ENCODE measurements at regions of chr11 and their contacts with region 1.

Region 1: DNA sequence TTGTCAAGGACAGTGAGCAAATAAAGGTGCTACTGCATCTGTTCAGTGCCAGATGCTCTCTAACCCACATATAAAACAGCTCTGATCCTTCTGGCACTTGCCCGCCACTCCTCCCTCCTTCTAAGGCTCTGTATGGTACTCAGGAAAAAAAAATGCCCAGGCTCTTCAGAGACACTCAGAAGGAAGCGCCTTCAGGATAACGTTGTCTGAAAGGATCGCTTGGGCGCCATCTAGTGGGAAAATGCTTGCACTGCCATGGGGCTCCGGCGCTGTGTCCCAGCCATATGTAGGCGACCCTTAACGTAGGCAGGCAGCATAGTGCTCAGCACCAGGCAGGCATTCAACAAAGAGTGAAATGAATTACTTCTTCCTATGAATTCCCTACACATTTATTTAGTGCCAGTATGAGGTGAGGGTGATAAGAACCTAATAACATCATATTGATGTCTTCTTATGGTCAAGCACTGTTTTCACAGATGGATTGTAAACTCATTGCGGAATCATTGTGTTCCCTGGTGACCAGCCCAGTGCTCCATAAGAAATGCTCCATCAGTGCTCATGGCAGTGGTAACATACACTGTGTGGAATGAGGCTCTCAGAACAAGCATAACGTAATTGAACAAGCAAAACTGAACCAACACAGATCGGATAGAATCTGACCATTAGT is 39.6 kb downstream of the PAMR1 start:
- DNase-seq: no peak
- H3K4me3 ChIP-seq: no peak overlapping the region
- CTCF ChIP-seq: peak; percentile 90

Region 2: GRCh38 chr11:35272391-35272902 is 213.3 kb before region 1 on chr11:
- CTCF ChIA-PET with region 1: no interaction called
- POLR2A ChIA-PET with region 1: no interaction called
- DNase-seq: no peak
- H3K4me3 ChIP-seq: no peak overlapping the region
- CTCF ChIP-seq: no peak

Region 3: DNA sequence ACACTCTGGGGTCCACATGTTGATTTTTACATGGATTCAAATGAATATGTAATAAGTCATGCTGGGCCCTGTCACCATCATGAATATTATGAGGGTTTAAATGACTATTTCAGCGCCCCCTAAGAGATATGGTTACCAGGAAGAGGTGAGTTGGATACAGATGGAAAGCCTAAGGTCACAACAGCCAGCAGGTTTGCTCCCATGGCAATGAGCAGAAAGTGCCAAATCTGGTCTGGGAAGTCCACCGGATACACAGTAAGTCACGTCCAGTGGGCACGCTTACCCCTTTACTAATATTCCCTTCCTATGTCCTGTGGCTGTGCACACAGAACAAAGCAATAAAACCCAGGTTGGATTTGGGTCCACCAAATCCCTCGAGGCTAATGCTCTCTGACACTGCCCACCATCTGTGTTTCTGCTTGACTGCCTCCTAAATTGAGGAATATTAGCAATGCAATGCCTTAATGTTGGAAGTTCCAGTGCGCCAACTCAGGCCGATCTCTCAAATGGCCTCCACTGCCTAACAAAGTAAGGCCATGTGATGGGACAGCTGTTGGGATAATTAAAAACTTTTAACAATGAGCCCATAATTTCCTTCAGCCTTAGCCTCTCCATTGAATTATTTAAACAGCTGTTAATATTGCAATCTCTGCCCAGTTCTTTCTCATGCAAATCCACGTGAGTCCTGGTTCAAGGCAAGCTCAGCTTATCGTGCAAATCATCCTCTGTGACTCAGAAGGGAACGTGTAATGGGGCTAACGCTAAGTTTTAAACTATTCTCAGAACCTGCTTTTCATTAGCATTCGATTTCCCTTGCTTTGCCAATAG is 164.0 kb before region 1 on chr11:
- CTCF ChIA-PET with region 1: no interaction called
- POLR2A ChIA-PET with region 1: no interaction called
- DNase-seq: peak; percentile 72
- H3K4me3 ChIP-seq: no peak overlapping the region
- CTCF ChIP-seq: no peak

Region 4: DNA sequence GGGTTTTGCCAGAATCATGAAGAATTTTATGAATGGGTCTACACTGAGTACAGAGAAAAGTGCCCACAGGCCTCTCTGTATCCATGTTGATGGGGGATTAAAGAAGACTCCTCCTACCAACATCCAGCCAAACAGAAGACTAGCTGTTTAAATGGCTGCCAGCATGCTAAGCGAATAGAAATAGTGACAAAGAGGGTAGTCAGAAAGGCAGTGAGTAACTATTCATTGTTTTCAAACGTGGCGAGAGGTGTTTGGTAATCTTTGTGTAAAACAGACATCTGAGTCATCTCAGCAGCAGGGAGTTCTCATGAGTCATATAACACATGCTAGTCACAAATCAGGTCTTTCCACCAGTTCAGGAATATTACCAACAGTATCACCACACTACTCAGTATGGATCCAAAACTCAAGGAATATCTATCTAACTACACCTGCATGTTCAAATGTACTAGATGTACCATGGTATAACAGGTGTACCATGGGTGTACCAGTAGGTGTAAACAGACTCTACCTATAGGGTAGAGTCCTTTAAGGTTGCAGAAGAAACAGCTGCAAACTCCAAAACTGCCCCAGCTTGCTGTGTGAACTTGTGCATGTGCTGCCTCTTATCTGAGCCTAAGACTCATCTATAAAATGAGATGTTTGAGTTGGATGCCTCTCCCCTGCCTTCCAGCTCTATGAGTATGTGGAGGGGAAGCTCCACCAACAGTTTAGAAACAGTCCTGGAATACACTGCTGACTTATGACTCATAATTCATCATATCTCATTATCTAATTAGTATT is 148.5 kb before region 1 on chr11:
- CTCF ChIA-PET with region 1: no interaction called
- POLR2A ChIA-PET with region 1: no interaction called
- DNase-seq: peak; percentile 89
- H3K4me3 ChIP-seq: no peak overlapping the region
- CTCF ChIP-seq: no peak

Region 5: DNA sequence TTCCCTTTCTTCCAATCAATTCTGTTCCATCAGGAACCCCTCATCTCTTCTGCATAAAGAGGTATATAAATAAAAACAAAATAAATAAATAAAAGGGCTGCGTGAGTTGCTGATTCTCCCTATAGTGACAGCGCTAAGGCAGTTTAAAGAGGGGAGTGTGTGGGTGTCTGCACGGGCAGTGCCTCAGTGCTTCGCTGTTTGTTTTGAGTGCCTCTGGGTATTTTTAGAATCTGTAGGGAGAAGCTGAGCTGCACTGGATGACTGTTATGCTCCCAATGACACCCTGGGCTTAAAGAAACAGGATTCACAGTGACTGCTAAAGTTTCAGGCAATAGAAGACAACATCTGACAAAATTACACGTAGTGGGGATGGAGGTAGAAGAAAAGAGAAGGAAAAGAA is 105.2 kb before region 1 on chr11:
- CTCF ChIA-PET with region 1: no interaction called
- POLR2A ChIA-PET with region 1: no interaction called
- DNase-seq: no peak
- H3K4me3 ChIP-seq: no peak overlapping the region
- CTCF ChIP-seq: no peak

Region 6: GRCh38 chr11:35391922-35392813 is 93.6 kb before region 1 on chr11:
- CTCF ChIA-PET with region 1: interaction called, 18 read pairs
- POLR2A ChIA-PET with region 1: no interaction called
- DNase-seq: peak; percentile 31
- H3K4me3 ChIP-seq: no peak overlapping the region
- CTCF ChIP-seq: peak; percentile 85

Region 7: GRCh38 chr11:35464308-35464707 is 21.5 kb before region 1 on chr11:
- CTCF ChIA-PET with region 1: interaction called, 10 read pairs
- POLR2A ChIA-PET with region 1: no interaction called
- DNase-seq: no peak
- H3K4me3 ChIP-seq: no peak overlapping the region
- CTCF ChIP-seq: peak; percentile 44

Region 8: GRCh38 chr11:35549787-35550186 is 64.0 kb after region 1 on chr11:
- CTCF ChIA-PET with region 1: interaction called, 11 read pairs
- POLR2A ChIA-PET with region 1: no interaction called
- DNase-seq: peak; percentile 97
- H3K4me3 ChIP-seq: no peak overlapping the region
- CTCF ChIP-seq: no peak

Region 9: GRCh38 chr11:35605711-35606110 is 119.9 kb after region 1 on chr11:
- CTCF ChIA-PET with region 1: interaction called, 12 read pairs
- POLR2A ChIA-PET with region 1: no interaction called
- DNase-seq: no peak
- H3K4me3 ChIP-seq: no peak overlapping the region
- CTCF ChIP-seq: no peak

Region 10: DNA sequence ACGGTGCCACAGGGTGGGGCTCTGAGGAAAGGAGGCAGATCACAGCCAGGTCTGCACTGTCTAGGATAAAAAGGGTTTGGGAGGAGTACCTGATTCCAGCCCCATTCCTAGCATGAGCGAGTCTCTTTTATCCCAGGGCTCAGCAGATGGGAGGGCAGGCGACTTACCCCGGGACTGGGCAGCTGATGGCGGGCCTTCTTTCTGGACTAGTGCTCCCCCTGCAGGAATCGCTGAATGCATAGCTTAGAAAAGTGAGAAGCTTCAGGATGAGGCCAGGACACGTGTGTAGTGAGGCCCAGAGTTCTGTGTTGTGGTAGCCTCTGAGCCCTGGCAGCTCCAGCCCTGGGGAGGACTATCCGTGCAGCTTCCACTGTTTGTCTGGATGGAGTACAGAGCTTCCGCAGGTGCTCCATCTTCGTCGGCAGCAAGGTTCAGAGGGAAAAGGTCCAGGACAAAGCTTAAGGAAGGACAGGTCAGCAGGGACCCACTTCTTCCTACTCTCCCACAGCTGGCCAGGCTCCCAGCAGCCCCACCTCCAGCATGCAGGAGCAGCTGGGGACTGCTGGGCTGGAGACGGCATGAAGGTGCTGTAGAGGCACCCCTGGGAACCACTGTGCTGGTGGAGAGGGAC is 773.1 kb after region 1 on chr11:
- CTCF ChIA-PET with region 1: interaction called, 40 read pairs
- POLR2A ChIA-PET with region 1: no interaction called
- DNase-seq: peak; percentile 36
- H3K4me3 ChIP-seq: no peak overlapping the region
- CTCF ChIP-seq: peak; percentile 76